HepG2 (cell line): ENCODE measurements at regions of chr6 and their contacts with region 1.

Region 1: DNA sequence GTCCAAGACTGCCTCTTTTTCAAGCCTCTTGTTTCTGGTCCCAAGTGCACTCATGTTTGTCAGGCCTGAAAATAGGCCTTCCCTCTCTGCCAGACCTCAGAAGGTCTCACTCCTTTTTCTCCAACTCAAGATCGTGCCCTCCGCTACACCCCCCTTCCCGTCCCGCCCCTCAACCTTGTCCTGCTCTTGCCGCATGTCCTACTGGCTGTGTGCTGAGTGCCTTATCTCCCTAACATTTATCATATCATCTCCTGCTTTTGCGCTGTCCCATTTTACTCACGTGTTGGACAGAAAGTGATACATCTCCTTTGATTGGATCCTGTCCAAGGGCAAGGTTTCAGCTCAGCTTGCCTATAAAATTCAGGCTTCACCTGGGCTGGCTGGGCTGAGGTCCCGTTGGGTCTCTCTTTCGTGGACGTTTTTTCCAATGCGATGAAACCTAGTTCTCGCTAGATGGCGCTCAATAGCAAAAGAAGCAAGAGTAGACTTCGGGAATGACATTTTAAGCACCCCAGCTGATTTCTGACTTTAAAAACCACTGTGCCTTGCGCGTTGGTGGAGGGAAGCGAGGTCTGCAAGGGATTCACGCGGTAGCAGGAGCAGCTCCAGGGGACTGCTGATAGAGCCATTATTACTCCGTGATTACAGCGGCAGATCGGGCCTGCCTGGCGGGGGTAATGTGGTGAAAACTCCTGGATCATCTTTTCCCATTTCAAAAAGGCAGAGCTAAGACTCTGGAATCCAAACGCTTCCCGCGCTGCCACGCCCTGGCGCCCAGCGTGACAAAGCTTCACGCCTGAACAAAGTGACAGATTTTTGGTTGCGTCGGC is 137.6 kb downstream of the IMPG1 start:
- DNase-seq: peak; percentile 70
- ATAC-seq: peak; percentile 81
- H3K4me3 ChIP-seq: peak overlapping the region in 1 of 3 experiments; percentile 53; a peak in 1 of 6 replicates
- H3K27ac ChIP-seq: no peak overlapping the region
- H3K4me1 ChIP-seq: peaks cover 14% of the 10 kb centered on the region; the same call in 1 of the 2 replicates
- H3K27me3 ChIP-seq: peaks cover 0 to 3% of the 10 kb centered on the region in 2 experiments; a peak in 1 of 5 replicates
- CTCF ChIP-seq: peak; percentile 85
- EP300 ChIP-seq: no peak
- POLR2A ChIP-seq: no peak
- RAD21 ChIP-seq: peak; percentile 62

Region 2: GRCh38 chr6:76351275-76351674 is 416.4 kb after region 1 on chr6:
- CTCF ChIA-PET with region 1: no interaction called
- POLR2A ChIA-PET with region 1: no interaction called
- in situ Hi-C with region 1: no loop called
- intact Hi-C with region 1: loop called (anchors 1 kb)
- DNase-seq: peak; percentile 4
- ATAC-seq: peak; percentile 76
- H3K4me3 ChIP-seq: no peak overlapping the region
- H3K27ac ChIP-seq: no peak overlapping the region
- H3K4me1 ChIP-seq: no peaks in the 10 kb centered on the region
- H3K27me3 ChIP-seq: no peaks in the 10 kb centered on the region
- CTCF ChIP-seq: peak; percentile 37
- EP300 ChIP-seq: no peak
- POLR2A ChIP-seq: no peak
- RAD21 ChIP-seq: no peak

Region 3: GRCh38 chr6:76682842-76683241 is 748.0 kb after region 1 on chr6:
- CTCF ChIA-PET with region 1: no interaction called
- POLR2A ChIA-PET with region 1: no interaction called
- in situ Hi-C with region 1: no loop called
- intact Hi-C with region 1: loop called (anchors 10 kb)
- DNase-seq: peak; percentile 2
- ATAC-seq: no peak
- H3K4me3 ChIP-seq: no peak overlapping the region
- H3K27ac ChIP-seq: no peak overlapping the region
- H3K4me1 ChIP-seq: no peaks in the 10 kb centered on the region
- H3K27me3 ChIP-seq: no peaks in the 10 kb centered on the region; a peak in 1 of 5 replicates
- CTCF ChIP-seq: no peak
- EP300 ChIP-seq: no peak
- POLR2A ChIP-seq: no peak
- RAD21 ChIP-seq: no peak

Region 4: GRCh38 chr6:76877238-76877553 is 942.3 kb after region 1 on chr6:
- CTCF ChIA-PET with region 1: no interaction called
- POLR2A ChIA-PET with region 1: no interaction called
- in situ Hi-C with region 1: loop called (anchors 25 kb)
- intact Hi-C with region 1: loop called (anchors 5 kb)
- DNase-seq: no peak
- ATAC-seq: no peak
- H3K4me3 ChIP-seq: no peak overlapping the region
- H3K27ac ChIP-seq: no peak overlapping the region
- H3K4me1 ChIP-seq: no peaks in the 10 kb centered on the region
- H3K27me3 ChIP-seq: no peaks in the 10 kb centered on the region
- CTCF ChIP-seq: no peak
- EP300 ChIP-seq: no peak
- POLR2A ChIP-seq: no peak
- RAD21 ChIP-seq: no peak